ENCODE measurements at regions of chr21 and their contacts with region 1.

Region 1: GRCh38 chr21:42258153-42258884 is 39.4 kb downstream of the ABCG1 start:
- DNase-seq: peak; percentile 89
- ATAC-seq: peak; percentile 99
- H3K4me3 Mint-ChIP-seq: no peak overlapping the region
- H3K27ac Mint-ChIP-seq: no peak overlapping the region
- H3K4me1 Mint-ChIP-seq: peaks cover 17% of the 10 kb centered on the region
- H3K27me3 Mint-ChIP-seq: no peaks in the 10 kb centered on the region
- CTCF ChIP-seq: peak; percentile 89

Region 2: DNA sequence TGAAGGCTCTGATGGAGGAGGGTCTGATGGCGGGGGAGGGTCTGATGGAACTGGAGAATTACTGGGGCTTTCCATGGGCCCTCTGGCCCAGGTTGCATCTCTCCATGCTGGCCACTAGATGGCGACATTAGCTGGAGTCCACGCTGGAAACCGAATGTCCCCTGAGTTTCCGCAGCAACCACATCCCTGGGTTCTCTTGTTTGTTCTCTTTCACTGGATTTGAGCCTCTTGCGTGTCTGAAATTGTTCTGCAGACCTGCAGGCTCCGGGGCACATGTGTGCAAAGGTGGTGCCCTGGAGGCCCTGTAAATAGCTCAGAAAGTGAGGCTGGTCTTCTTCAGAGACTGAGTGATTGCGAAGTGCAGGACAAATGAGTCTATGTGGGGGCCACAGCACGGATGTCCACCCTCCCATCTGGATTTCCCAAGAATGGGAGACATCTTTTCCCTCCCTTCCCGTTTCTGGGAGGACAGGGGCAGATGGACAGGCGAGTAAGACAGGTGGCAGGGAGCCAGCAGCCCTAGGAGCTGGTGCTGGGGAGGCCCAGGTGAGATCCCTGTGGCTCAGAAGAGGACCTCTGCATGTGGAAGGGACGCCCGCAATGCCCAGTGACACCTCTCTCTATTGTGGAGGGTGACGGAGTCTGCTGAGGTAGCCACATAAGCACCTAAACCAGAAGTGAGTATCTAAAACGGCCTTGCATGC is 112.6 kb before region 1 on chr21:
- CTCF ChIA-PET with region 1: interaction called, 133 read pairs
- POLR2A ChIA-PET with region 1: no interaction called
- intact Hi-C with region 1: loop called (anchors 5 kb)
- DNase-seq: peak; percentile 75
- ATAC-seq: peak; percentile 89
- H3K4me3 Mint-ChIP-seq: no peak overlapping the region
- H3K27ac Mint-ChIP-seq: no peak overlapping the region
- H3K4me1 Mint-ChIP-seq: peaks cover 8% of the 10 kb centered on the region
- H3K27me3 Mint-ChIP-seq: no peaks in the 10 kb centered on the region
- CTCF ChIP-seq: peak; percentile 91

Region 3: DNA sequence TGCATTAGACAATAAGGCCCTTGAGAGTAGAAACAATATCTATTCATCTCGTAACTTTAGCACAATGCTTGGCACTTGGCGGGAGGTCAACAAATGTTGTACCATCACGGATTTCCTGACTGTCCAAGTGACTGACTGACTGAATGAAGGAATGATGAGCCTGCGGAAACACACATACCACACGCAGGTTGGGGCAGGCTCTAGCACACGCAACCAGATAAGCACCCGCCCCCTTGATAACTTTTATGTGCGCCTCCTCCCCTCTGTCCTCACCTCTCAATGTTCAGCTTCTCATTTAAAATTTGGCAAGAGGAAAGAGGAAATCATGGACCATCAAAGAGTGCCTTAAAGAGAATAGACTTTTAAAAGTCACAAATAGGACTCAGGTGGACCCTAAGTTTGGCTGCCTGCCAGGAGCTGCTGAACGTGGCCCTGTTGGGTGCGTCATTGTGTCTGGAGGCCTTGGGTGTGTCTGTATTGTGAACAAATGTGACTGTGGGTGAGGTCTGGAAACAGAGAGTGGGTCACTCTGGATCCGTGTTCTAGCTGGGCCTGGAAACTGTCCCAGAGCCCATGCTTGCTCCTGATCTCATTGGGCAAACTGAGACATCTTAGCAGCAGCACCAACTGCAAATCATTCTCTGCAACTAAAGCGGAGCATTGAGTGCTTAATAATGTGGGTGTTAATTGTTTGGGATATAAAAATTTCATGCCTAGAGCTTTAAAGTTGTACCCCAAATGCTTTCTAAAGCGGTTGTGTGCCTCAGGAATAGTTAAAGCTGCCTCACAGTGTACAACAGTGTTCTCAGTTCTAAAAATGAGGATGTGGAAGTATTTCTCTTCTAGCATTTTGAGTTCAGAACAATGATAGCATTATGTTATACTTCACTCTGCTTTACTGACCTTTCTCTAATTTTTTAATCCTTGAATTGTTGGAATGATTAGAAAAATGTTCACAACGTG is 86.9 kb before region 1 on chr21:
- CTCF ChIA-PET with region 1: interaction called, 84 read pairs
- POLR2A ChIA-PET with region 1: no interaction called
- intact Hi-C with region 1: no loop called
- DNase-seq: no peak
- ATAC-seq: no peak
- H3K4me3 Mint-ChIP-seq: no peak overlapping the region
- H3K27ac Mint-ChIP-seq: no peak overlapping the region
- H3K4me1 Mint-ChIP-seq: peaks cover 6% of the 10 kb centered on the region
- H3K27me3 Mint-ChIP-seq: no peaks in the 10 kb centered on the region
- CTCF ChIP-seq: no peak

Region 4: GRCh38 chr21:42199488-42200458 is 58.5 kb before region 1 on chr21:
- CTCF ChIA-PET with region 1: interaction called, 11 read pairs
- POLR2A ChIA-PET with region 1: no interaction called
- intact Hi-C with region 1: no loop called
- DNase-seq: peak; percentile 44
- ATAC-seq: peak; percentile 86
- H3K4me3 Mint-ChIP-seq: no peak overlapping the region
- H3K27ac Mint-ChIP-seq: peak overlapping the region; percentile 83
- H3K4me1 Mint-ChIP-seq: peaks cover 51% of the 10 kb centered on the region
- H3K27me3 Mint-ChIP-seq: no peaks in the 10 kb centered on the region
- CTCF ChIP-seq: no peak

Region 5: GRCh38 chr21:42238185-42238934 is 20.0 kb before region 1 on chr21:
- CTCF ChIA-PET with region 1: interaction called, 38 read pairs
- POLR2A ChIA-PET with region 1: interaction called, 15 read pairs
- intact Hi-C with region 1: no loop called
- DNase-seq: peak; percentile 65
- ATAC-seq: no peak
- H3K4me3 Mint-ChIP-seq: peak overlapping the region; percentile 45
- H3K27ac Mint-ChIP-seq: peak overlapping the region; percentile 93
- H3K4me1 Mint-ChIP-seq: peaks cover 64% of the 10 kb centered on the region
- H3K27me3 Mint-ChIP-seq: no peaks in the 10 kb centered on the region
- CTCF ChIP-seq: no peak

Region 6: GRCh38 chr21:42553435-42553834 is 295.1 kb after region 1 on chr21:
- CTCF ChIA-PET with region 1: no interaction called
- POLR2A ChIA-PET with region 1: no interaction called
- intact Hi-C with region 1: no loop called
- DNase-seq: no peak
- ATAC-seq: no peak
- H3K4me3 Mint-ChIP-seq: no peak overlapping the region
- H3K27ac Mint-ChIP-seq: no peak overlapping the region
- H3K4me1 Mint-ChIP-seq: no peaks in the 10 kb centered on the region
- H3K27me3 Mint-ChIP-seq: no peaks in the 10 kb centered on the region
- CTCF ChIP-seq: no peak